ENCODE measurements at regions of chr7 and their contacts with region 1.

Region 1: GRCh38 chr7:87152107-87152844 is at the start of gene DMTF1:
- DNase-seq: peak; percentile 88
- H3K4me3 Mint-ChIP-seq: peak within 1 kb of the TSS; percentile 94
- H3K27ac Mint-ChIP-seq: peak within 1 kb of the TSS; percentile 93
- H3K4me1 Mint-ChIP-seq: peaks cover 43% of the 10 kb centered on the region
- H3K27me3 Mint-ChIP-seq: no peaks in the 10 kb centered on the region
- total RNA-seq, gene DMTF1: 95.3 to 97.8 TPM

Region 2: GRCh38 chr7:86916277-86916825 is 235.9 kb before region 1 on chr7:
- CTCF ChIA-PET with region 1: interaction called, 10 read pairs
- POLR2A ChIA-PET with region 1: no interaction called
- DNase-seq: no peak
- H3K4me3 Mint-ChIP-seq: no peak overlapping the region
- H3K27ac Mint-ChIP-seq: no peak overlapping the region
- H3K4me1 Mint-ChIP-seq: no peaks in the 10 kb centered on the region
- H3K27me3 Mint-ChIP-seq: no peaks in the 10 kb centered on the region

Region 3: GRCh38 chr7:86942081-86942480 is 210.2 kb before region 1 on chr7:
- CTCF ChIA-PET with region 1: interaction called, 21 read pairs
- POLR2A ChIA-PET with region 1: interaction called, 4 read pairs
- DNase-seq: no peak
- H3K4me3 Mint-ChIP-seq: no peak overlapping the region
- H3K27ac Mint-ChIP-seq: no peak overlapping the region
- H3K4me1 Mint-ChIP-seq: no peaks in the 10 kb centered on the region
- H3K27me3 Mint-ChIP-seq: no peaks in the 10 kb centered on the region

Region 4: GRCh38 chr7:87173471-87173870 is 21.2 kb after region 1 on chr7:
- CTCF ChIA-PET with region 1: interaction called, 3 read pairs
- POLR2A ChIA-PET with region 1: interaction called, 19 read pairs
- DNase-seq: no peak
- H3K4me3 Mint-ChIP-seq: no peak overlapping the region
- H3K27ac Mint-ChIP-seq: no peak overlapping the region
- H3K4me1 Mint-ChIP-seq: peaks cover 9% of the 10 kb centered on the region
- H3K27me3 Mint-ChIP-seq: no peaks in the 10 kb centered on the region

Region 5: DNA sequence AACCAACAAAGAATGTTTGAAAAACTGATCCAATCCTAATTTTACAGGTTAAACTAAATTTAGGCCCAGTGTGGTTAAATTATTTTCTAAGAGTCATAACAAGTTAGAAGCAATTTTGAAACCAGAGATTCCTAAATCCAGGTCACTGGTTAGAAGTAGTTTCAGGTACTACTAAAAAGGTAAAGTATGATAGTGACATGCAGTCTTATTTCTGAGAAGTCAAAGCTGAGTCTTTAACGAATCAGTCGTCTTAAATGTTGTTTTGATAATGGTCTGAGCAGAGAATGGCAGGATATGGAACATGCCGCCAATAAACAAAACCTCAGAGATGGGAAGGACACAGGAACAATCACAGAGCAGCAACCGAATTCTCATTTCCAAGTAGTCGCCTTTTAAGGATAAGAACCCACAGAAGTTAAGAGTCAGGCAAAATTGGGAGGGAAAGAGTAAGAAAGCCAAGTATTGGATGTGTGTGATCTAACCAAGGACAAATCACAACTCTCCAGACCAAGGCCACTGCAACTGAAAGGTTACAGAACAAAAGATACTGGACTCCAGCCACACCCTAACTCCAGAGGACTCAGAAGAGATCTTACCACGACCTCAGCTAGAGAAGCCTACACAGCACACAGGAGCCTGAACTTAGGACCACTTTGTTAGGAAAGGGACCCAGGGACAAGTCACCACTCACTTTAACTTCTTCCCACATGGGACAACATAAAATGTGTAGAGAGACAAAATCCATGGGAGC is 47.6 kb after region 1 on chr7:
- CTCF ChIA-PET with region 1: interaction called, 4 read pairs
- POLR2A ChIA-PET with region 1: interaction called, 11 read pairs
- DNase-seq: no peak
- H3K4me3 Mint-ChIP-seq: no peak overlapping the region
- H3K27ac Mint-ChIP-seq: no peak overlapping the region
- H3K4me1 Mint-ChIP-seq: peaks cover 25% of the 10 kb centered on the region
- H3K27me3 Mint-ChIP-seq: no peaks in the 10 kb centered on the region

Region 6: GRCh38 chr7:87345166-87345927 is 193.1 kb after region 1 on chr7 and contains the start of gene CROT:
- CTCF ChIA-PET with region 1: no interaction called
- POLR2A ChIA-PET with region 1: interaction called, 18 read pairs
- DNase-seq: peak; percentile 95
- H3K4me3 Mint-ChIP-seq: peak within 1 kb of the TSS; percentile 86
- H3K27ac Mint-ChIP-seq: peak within 1 kb of the TSS; percentile 88
- H3K4me1 Mint-ChIP-seq: peaks cover 48% of the 10 kb centered on the region
- H3K27me3 Mint-ChIP-seq: no peaks in the 10 kb centered on the region
- total RNA-seq, gene CROT: 9.5 to 12.6 TPM

Measured in activated CD4-positive, alpha-beta memory T cell treated with anti-CD3 and anti-CD28 coated beads, Interleukin-2, amount 10 ng/mL, durations not matched to agents 7 days and 5 days (primary cell).